GM12878 (cell line): ENCODE measurements at regions of chr17 and their contacts with region 1.

Region 1: GRCh38 chr17:48024937-48025906 is 12.4 kb downstream of the COPZ2 start:
- DNase-seq: peak; percentile 70
- ATAC-seq: peak; percentile 91
- H3K4me3 ChIP-seq: peak overlapping the region; percentile 80
- H3K27ac ChIP-seq: no peak overlapping the region
- H3K4me1 ChIP-seq: peaks cover 27% of the 10 kb centered on the region
- H3K27me3 ChIP-seq: no peaks in the 10 kb centered on the region; a peak in 2 of 4 replicates
- CTCF ChIP-seq: peak; percentile 85 to 98 (median 89)
- EP300 ChIP-seq: no peak
- POLR2A ChIP-seq: peak; percentile 54; the same call in 1 of the 2 replicates
- RAD21 ChIP-seq: peak; percentile 88

Region 2: DNA sequence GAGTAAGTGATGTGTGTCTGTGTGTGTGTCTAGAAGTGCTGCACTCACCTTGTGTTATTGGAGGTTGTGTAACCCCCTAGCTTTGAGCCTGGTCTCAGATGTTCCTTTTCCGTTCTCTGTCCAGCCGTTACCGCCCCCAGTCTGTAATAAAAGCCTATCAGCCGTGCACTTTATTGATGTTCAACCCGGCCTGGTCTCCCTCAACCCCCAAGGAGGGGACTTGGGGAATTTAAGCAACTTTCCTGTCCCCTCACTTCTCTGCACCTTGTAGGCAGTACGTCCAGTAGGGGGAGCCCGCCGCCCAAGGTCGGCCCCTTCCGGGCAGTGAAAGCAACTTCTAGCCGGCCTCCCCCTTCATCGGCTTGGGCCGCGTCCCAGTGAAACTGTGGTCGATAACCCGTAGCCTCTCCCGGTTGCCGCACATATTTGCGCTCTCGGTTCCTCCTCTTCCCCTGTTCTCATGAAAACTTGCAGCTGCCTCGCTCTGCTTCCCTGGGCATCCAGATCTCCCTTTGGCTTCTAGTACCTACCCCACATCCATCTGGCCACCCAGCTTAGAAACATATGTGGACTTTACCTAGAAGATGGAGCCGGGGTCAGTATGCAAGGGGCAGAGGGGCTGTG is 76.0 kb before region 1 on chr17:
- CTCF ChIA-PET with region 1: interaction called, 419 read pairs
- POLR2A ChIA-PET with region 1: interaction called, 3 read pairs
- RAD21 ChIA-PET with region 1: interaction called, 18 read pairs
- SMC1A ChIA-PET with region 1: interaction called, 158 read pairs
- in situ Hi-C with region 1: no loop called
- intact Hi-C with region 1: no loop called
- DNase-seq: peak; percentile 53
- ATAC-seq: peak; percentile 92
- H3K4me3 ChIP-seq: peak overlapping the region; percentile 41; the same call in 1 of the 2 replicates
- H3K27ac ChIP-seq: peak overlapping the region; percentile 74
- H3K4me1 ChIP-seq: peaks cover 44% of the 10 kb centered on the region
- H3K27me3 ChIP-seq: no peaks in the 10 kb centered on the region
- CTCF ChIP-seq: peak; percentile 91 to 94 (median 94)
- EP300 ChIP-seq: peak in 1 of 2 experiments; percentile 45; a peak in 1 of 4 replicates
- POLR2A ChIP-seq: no peak
- RAD21 ChIP-seq: peak; percentile 86

Region 3: DNA sequence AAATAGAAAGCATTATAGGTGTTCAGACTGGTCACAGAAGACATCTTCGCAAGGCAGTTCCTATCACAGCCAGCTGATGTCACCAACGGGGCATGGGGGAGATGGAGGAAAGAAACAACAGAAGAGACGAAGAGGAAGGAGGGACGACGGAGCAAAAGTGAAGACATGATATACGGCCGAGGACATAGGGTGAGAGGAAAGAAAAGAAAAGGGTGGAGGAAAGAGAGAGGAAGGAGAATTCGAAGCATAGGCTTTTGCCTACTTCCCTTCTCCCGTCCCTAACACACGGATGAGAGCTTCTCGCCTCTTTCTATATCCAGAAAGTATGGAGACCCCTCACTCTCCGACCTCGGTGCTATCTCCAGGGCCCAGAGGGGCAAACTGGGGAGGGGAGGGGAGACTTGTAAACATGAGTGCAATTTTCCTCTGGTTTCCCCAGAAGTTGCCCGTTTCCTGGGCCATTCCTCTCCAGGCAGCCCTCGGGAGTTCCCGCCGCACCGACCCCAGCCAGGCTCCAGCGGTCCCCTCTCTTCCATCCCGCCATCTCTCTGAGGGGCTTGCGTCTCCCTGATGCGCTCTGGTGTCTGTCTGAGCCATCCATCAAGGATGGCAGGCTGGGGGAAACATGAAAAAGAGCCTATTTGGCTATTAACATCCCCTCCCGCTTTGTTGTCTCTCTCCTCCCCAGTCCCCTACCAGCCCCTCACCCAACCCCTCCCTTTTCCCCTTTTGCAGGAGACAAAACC is 13.6 kb before region 1 on chr17:
- CTCF ChIA-PET with region 1: interaction called, 12 read pairs
- POLR2A ChIA-PET with region 1: no interaction called
- RAD21 ChIA-PET with region 1: interaction called, 13 read pairs
- SMC1A ChIA-PET with region 1: interaction called, 11 read pairs
- in situ Hi-C with region 1: no loop called
- intact Hi-C with region 1: no loop called
- DNase-seq: no peak
- ATAC-seq: peak; percentile 92
- H3K4me3 ChIP-seq: peak overlapping the region; percentile 75
- H3K27ac ChIP-seq: no peak overlapping the region
- H3K4me1 ChIP-seq: peaks cover 7% of the 10 kb centered on the region
- H3K27me3 ChIP-seq: no peaks in the 10 kb centered on the region
- CTCF ChIP-seq: peak; percentile 61 to 76 (median 72)
- EP300 ChIP-seq: no peak
- POLR2A ChIP-seq: no peak
- RAD21 ChIP-seq: peak; percentile 52; the same call in 1 of the 2 replicates

Region 4: DNA sequence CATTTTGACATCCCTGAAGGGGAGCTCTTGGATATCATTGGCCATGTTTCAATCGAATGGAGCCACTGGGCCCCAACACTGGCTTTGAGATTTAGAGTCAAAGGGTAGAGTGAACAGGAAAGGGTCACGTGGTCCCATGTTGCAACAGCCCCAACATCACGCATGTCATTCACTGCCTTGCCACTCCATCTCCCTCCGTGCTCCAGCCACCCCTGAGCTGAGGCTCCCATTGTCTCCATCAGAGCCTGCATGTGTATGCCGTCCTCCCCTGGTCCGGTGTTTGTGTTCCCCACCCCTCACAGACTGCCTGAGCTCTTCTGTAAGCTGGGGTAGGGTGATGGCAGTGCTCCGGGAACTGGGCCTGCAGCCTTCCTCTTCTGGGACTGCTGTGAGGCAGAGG is 35.0 kb after region 1 on chr17:
- CTCF ChIA-PET with region 1: interaction called, 44 read pairs
- POLR2A ChIA-PET with region 1: interaction called, 3 read pairs
- RAD21 ChIA-PET with region 1: interaction called, 32 read pairs
- SMC1A ChIA-PET with region 1: interaction called, 12 read pairs
- in situ Hi-C with region 1: loop called (anchors 5 kb)
- intact Hi-C with region 1: no loop called
- DNase-seq: no peak
- ATAC-seq: no peak
- H3K4me3 ChIP-seq: no peak overlapping the region
- H3K27ac ChIP-seq: no peak overlapping the region
- H3K4me1 ChIP-seq: peaks cover 14% of the 10 kb centered on the region
- H3K27me3 ChIP-seq: no peaks in the 10 kb centered on the region
- CTCF ChIP-seq: no peak
- EP300 ChIP-seq: no peak
- POLR2A ChIP-seq: no peak; the same call in 1 of the 2 replicates
- RAD21 ChIP-seq: no peak

Region 5: GRCh38 chr17:48101012-48101720 is 75.9 kb after region 1 on chr17 and contains the start of gene CBX1:
- CTCF ChIA-PET with region 1: interaction called, 32 read pairs
- POLR2A ChIA-PET with region 1: no interaction called
- RAD21 ChIA-PET with region 1: interaction called, 16 read pairs
- SMC1A ChIA-PET with region 1: interaction called, 9 read pairs
- in situ Hi-C with region 1: no loop called
- intact Hi-C with region 1: no loop called
- DNase-seq: peak; percentile 89
- ATAC-seq: peak; percentile 98
- H3K4me3 ChIP-seq: peak within 1 kb of the TSS; percentile 87
- H3K27ac ChIP-seq: peak within 1 kb of the TSS; percentile 80
- H3K4me1 ChIP-seq: peaks cover 23% of the 10 kb centered on the region
- H3K27me3 ChIP-seq: no peaks in the 10 kb centered on the region
- CTCF ChIP-seq: no peak
- EP300 ChIP-seq: no peak
- POLR2A ChIP-seq: peak; percentile 74
- RAD21 ChIP-seq: no peak
- polyA plus RNA-seq, gene CBX1: 11.8 to 20.3 TPM

Region 6: GRCh38 chr17:48335858-48336500 is 310.8 kb after region 1 on chr17:
- CTCF ChIA-PET with region 1: interaction called, 6 read pairs
- POLR2A ChIA-PET with region 1: no interaction called
- RAD21 ChIA-PET with region 1: no interaction called
- SMC1A ChIA-PET with region 1: interaction called, 3 read pairs
- in situ Hi-C with region 1: no loop called
- intact Hi-C with region 1: loop called (anchors 5 kb)
- DNase-seq: peak; percentile 37
- ATAC-seq: peak; percentile 75
- H3K4me3 ChIP-seq: no peak overlapping the region
- H3K27ac ChIP-seq: no peak overlapping the region
- H3K4me1 ChIP-seq: peaks cover 10% of the 10 kb centered on the region; the same call in 1 of the 2 replicates
- H3K27me3 ChIP-seq: no peaks in the 10 kb centered on the region
- CTCF ChIP-seq: peak; percentile 59 to 72 (median 65)
- EP300 ChIP-seq: no peak
- POLR2A ChIP-seq: no peak
- RAD21 ChIP-seq: peak; percentile 79